T-cell (primary cell): ENCODE measurements at regions of chr7 and their contacts with region 1.

Region 1: DNA sequence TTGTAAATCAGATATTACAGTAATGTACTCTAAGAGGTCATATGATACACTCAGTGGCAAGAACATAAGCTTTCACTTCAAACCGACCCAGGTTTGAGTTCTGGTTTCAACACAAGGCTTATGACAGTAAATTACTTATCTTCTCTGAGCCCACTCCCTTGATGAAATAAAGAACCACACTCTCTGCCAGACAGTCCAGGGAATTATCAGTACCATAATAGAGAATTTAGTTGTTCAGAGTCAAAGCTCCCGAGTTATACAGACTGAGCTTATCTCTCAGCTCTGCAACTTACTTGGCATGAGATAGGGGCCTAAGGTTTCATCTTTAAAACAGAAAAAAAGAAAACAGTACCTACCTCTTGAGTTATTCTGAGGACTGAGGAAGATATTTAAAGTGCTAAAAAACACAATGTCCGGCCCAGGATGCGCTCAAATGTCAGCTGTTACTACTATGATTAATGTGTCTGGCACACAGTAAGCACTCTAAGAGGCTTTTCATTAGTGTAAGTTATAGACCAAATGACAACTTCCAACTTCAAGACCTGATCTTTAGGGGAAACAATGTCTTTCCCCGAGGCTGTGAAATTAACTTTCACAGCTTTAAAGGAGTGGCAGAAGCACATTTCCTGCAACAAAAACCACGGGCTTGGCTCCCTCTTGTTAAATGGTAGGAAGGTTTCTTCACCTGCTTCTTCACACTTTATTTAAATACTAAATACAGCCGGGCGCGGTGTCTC is 38.1 kb downstream of the UBE2H start:
- DNase-seq: peak in 15 of 35 experiments; percentile 4 to 44 (median 10)
- ATAC-seq: peak in 2 of 4 experiments; percentile 60 to 69
- H3K4me3 ChIP-seq: no peak overlapping the region
- H3K4me3 Mint-ChIP-seq: peak overlapping the region; percentile 28 to 57 (median 43)
- H3K27ac ChIP-seq: peak overlapping the region; percentile 11
- H3K27ac Mint-ChIP-seq: peak overlapping the region; percentile 57 to 60
- H3K4me1 ChIP-seq: peaks cover 27 to 38% of the 10 kb centered on the region in 2 experiments
- H3K4me1 Mint-ChIP-seq: peaks cover 73 to 85% (median 80%) of the 10 kb centered on the region in 3 donors
- H3K27me3 ChIP-seq: no peaks in the 10 kb centered on the region
- H3K27me3 Mint-ChIP-seq: no peaks in the 10 kb centered on the region

Region 2: GRCh38 chr7:129903935-129904334 is 10.8 kb before region 1 on chr7:
- CTCF ChIA-PET with region 1: no interaction called
- POLR2A ChIA-PET with region 1: interaction called in 1 of 2 experiments, 11 read pairs
- DNase-seq: no peak
- ATAC-seq: no peak
- H3K4me3 ChIP-seq: no peak overlapping the region
- H3K4me3 Mint-ChIP-seq: peak overlapping the region in 1 of 3 donors; percentile 78
- H3K27ac ChIP-seq: no peak overlapping the region
- H3K27ac Mint-ChIP-seq: peak overlapping the region; percentile 25 to 87
- H3K4me1 ChIP-seq: peaks cover 30 to 41% of the 10 kb centered on the region in 2 experiments
- H3K4me1 Mint-ChIP-seq: peaks cover 83 to 86% (median 86%) of the 10 kb centered on the region in 3 donors
- H3K27me3 ChIP-seq: no peaks in the 10 kb centered on the region
- H3K27me3 Mint-ChIP-seq: no peaks in the 10 kb centered on the region

Region 3: GRCh38 chr7:129951226-129952085 is 36.8 kb after region 1 on chr7:
- CTCF ChIA-PET with region 1: no interaction called
- POLR2A ChIA-PET with region 1: interaction called in 1 of 2 experiments, 11 read pairs
- DNase-seq: peak in 3 of 35 experiments; percentile 1 to 22 (median 7)
- ATAC-seq: no peak
- H3K4me3 ChIP-seq: peak overlapping the region; percentile 97 to 98
- H3K4me3 Mint-ChIP-seq: no peak overlapping the region
- H3K27ac ChIP-seq: peak overlapping the region; percentile 93
- H3K27ac Mint-ChIP-seq: no peak overlapping the region
- H3K4me1 ChIP-seq: peaks cover 19 to 38% of the 10 kb centered on the region in 2 experiments
- H3K4me1 Mint-ChIP-seq: peaks cover 16 to 31% (median 21%) of the 10 kb centered on the region in 3 donors
- H3K27me3 ChIP-seq: no peaks in the 10 kb centered on the region
- H3K27me3 Mint-ChIP-seq: no peaks in the 10 kb centered on the region

Region 4: GRCh38 chr7:129969807-129970446 is 55.2 kb after region 1 on chr7:
- CTCF ChIA-PET with region 1: interaction called in 1 of 2 experiments, 11 read pairs
- POLR2A ChIA-PET with region 1: no interaction called
- DNase-seq: no peak
- ATAC-seq: no peak
- H3K4me3 ChIP-seq: no peak overlapping the region
- H3K4me3 Mint-ChIP-seq: no peak overlapping the region
- H3K27ac ChIP-seq: no peak overlapping the region
- H3K27ac Mint-ChIP-seq: no peak overlapping the region
- H3K4me1 ChIP-seq: no peaks in the 10 kb centered on the region
- H3K4me1 Mint-ChIP-seq: no peaks in the 10 kb centered on the region
- H3K27me3 ChIP-seq: peaks cover 0 to 4% of the 10 kb centered on the region in 2 experiments
- H3K27me3 Mint-ChIP-seq: no peaks in the 10 kb centered on the region